Gastrocnemius medialis (tissue), 4 donors: ENCODE measurements at regions of chr3 and their contacts with region 1.

Region 1: DNA sequence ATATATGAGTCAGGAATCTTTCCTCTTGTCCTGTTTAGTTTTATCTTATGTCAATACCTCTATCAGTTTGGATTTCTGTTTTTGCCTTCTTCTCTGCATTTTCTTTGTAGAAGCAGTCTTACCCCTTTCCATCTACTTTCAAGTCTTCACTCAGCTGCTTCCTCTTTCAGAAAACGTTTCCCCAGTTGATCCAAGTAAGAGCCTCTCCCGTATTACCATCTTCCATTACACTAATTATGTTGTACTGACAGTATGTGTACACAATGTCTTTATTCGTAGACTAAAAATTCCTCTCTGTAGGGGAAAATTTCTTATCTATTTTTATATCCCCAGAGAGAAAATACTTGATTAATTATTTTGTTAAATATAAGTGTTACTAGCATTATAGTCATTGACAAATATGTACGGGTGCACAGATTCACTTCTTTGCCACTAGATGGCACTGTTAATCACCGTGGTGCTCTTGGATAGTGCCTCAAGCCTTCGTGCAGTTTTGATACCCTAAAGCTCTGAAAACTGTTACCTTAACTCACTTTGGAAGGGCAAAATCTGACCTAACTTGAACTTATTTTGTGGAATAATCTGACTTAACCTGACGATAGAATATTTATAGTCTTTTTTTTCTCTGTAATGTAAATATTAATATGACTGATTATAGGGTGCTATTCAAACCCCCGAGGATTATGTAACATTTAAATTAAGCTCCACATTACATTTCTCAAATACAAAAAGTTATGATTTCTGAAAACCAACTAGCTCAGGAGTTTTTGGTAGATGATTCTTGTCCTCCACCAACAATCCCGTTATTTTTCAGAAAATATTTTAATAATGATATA is 74.2 kb upstream of the POU1F1 start:
- DNase-seq: no peak
- ATAC-seq: peak; percentile 56 to 86
- H3K4me3 ChIP-seq: no peak overlapping the region
- H3K27ac ChIP-seq: no peak overlapping the region
- H3K4me1 ChIP-seq: no peaks in the 10 kb centered on the region
- H3K27me3 ChIP-seq: no peaks in the 10 kb centered on the region
- CTCF ChIP-seq: peak; percentile 43 to 88 (median 65)
- POLR2A ChIP-seq: no peak

Region 2: GRCh38 chr3:87997298-87997697 is 646.7 kb after region 1 on chr3:
- in situ Hi-C with region 1: loop called in 2 of 4 experiments (anchors 25 kb)
- intact Hi-C with region 1: loop called (anchors 2 kb)
- DNase-seq: no peak
- ATAC-seq: no peak
- H3K4me3 ChIP-seq: no peak overlapping the region
- H3K27ac ChIP-seq: no peak overlapping the region
- H3K4me1 ChIP-seq: no peaks in the 10 kb centered on the region
- H3K27me3 ChIP-seq: no peaks in the 10 kb centered on the region
- CTCF ChIP-seq: no peak
- POLR2A ChIP-seq: no peak

Region 3: GRCh38 chr3:88003115-88003755 is 652.7 kb after region 1 on chr3:
- in situ Hi-C with region 1: loop called in 2 of 4 experiments (anchors 25 kb)
- intact Hi-C with region 1: loop called (anchors 2 kb)
- DNase-seq: no peak
- ATAC-seq: no peak
- H3K4me3 ChIP-seq: no peak overlapping the region
- H3K27ac ChIP-seq: no peak overlapping the region
- H3K4me1 ChIP-seq: no peaks in the 10 kb centered on the region
- H3K27me3 ChIP-seq: no peaks in the 10 kb centered on the region
- CTCF ChIP-seq: peak; percentile 28 to 60 (median 43)
- POLR2A ChIP-seq: no peak